GM10248 (cell line): ENCODE measurements at regions of chr3 and their contacts with region 1.

Region 1: DNA sequence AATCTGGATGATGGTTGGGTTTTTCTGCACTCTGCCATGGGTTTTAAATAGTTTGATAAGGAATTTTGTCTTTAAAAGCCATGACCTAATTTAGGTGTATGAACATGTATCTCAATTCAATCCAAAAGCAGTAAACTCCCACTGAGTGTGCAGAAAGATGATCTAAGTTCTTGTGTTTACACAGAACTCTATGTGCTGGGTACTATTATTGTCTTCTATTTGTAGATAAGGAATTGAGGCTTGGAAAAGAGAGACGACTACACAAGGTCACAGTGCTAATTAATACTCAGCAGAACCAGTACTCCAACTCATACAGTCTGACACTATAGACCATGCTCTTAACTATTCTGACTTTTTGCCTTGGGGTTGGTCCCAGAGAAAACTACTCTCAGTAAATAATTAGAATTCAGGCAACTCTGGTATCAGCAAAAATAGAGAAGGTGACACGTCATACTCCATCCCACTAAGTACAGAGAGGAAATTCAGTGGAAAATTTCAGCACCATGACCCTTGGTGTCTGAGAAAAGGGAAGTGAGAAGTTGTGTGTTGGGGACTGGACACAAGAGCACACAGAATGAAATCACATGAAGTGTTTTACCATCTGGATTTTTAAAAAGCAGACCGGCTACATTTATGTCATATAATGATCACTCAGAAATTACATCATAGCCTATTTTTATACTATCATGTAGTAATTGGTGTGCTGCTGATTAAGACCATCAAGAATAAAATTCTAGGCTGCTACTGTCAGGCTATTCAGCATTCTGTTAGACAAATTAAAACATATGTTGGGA is 18.3 kb upstream of the MYH15 start:
- DNase-seq: peak; percentile 28
- CTCF ChIP-seq: no peak

Region 2: DNA sequence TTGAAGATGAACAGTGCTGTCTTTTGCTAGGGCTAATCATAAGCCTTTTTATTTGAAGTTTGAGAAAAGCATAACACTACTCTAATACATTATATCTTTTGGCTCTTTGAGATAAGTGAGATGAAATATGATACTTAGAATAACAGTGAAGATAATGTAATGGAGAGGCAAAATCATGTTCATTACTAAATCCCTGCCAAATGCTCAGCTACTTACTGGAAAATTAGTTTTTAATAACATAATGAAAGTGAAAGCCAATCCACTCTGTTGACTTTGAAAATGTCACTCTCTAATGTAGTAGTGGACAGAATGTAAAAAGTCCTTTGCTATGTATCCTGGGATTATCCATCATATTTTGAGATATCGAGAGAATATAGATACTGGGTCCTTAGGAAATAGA is 17.6 kb after region 1 on chr3:
- CTCF ChIA-PET with region 1: interaction called, 55 read pairs
- POLR2A ChIA-PET with region 1: no interaction called
- DNase-seq: no peak
- CTCF ChIP-seq: no peak

Region 3: DNA sequence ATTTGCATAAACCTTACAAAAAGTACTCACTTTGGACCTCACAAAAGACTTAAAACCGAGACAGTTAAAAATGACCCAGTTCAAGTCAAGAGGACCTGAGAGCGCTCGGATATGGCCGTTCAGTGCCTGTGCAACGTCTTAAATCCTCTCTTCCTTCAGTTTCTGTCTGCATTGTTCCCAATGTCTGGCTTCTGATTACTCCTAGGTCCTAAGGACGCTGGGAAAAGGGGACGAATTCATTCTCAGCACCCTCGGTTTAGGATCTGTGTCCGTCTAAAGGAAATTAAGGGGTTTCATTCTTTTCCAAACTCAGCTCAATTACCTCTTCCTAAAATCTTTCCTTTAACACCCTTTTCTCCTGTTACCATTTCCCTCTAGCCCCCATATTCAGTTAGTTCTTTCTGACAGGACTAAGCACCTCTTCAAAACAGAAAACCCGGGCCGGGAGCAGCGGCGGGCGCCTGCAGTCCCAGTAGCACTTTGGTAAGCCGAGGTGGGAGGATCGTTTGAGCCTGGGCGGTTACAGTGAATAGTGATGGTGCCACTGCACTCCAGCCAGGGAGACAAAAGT is 807.7 kb after region 1 on chr3:
- CTCF ChIA-PET with region 1: no interaction called
- POLR2A ChIA-PET with region 1: no interaction called
- DNase-seq: no peak
- CTCF ChIP-seq: no peak